ENCODE measurements at regions of chr10 and their contacts with region 1.

Region 1: DNA sequence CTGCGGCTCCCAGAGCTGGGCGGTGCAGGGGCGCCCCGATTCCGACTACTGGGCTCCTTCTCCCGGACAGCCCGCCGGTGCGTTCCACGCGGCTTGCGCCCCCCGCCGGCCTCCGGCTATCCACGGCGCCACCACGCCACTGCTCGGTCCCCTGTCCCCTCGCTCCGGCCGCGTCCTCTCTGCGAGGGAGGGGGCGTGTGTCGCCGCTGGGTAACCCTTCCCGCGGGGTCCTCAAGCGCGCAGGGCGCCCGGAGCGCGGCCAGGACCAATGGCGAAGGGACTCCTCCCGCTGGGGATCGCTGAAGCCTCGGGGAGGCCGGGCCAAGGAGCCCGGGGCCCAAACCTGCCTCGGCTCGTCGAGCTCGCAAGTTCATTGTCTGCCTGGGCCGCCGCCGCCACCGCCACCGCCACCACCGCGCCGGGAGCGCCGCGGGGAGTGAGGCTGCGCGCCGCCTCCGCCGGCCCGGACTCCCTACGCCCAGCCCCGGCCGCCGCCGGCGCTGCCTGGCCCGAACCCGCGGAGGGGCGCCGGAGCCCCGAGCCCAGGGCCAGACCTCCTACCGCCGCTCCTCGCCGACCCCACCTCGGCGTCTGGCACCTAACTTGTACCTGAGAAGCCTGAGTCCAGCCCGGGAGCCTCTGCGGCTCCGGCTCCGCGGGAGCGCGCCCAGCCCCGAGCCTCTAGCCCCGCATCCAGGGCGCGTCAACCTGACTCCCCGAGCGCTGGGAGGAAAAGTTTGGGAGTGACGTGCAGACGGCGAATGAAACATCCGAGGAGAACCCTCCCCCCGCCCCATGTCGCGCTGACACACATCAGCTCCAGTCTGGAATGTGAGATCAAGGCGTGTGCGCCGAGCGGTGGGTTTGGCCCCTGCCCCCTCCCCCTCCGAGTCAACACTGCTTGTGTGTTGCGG is at the start of gene CHST15:
- DNase-seq: peak; percentile 55
- ATAC-seq: peak; percentile 43
- H3K4me3 Mint-ChIP-seq: peak within 1 kb of the TSS; percentile 90
- H3K27ac Mint-ChIP-seq: peak within 1 kb of the TSS; percentile 71
- H3K4me1 Mint-ChIP-seq: peaks cover 51% of the 10 kb centered on the region
- H3K27me3 Mint-ChIP-seq: no peaks in the 10 kb centered on the region
- CTCF ChIP-seq: no peak
- total RNA-seq, gene CHST15: 12.1 and 13.8 TPM in 2 replicates

Region 2: GRCh38 chr10:123994417-123995081 is 98.6 kb before region 1 on chr10:
- CTCF ChIA-PET with region 1: interaction called, 6 read pairs
- POLR2A ChIA-PET with region 1: interaction called, 8 read pairs
- intact Hi-C with region 1: loop called (anchors 2 kb)
- DNase-seq: peak; percentile 89
- ATAC-seq: peak; percentile 85
- H3K4me3 Mint-ChIP-seq: peak overlapping the region; percentile 73
- H3K27ac Mint-ChIP-seq: no peak overlapping the region
- H3K4me1 Mint-ChIP-seq: peaks cover 42% of the 10 kb centered on the region
- H3K27me3 Mint-ChIP-seq: peaks cover 38% of the 10 kb centered on the region
- CTCF ChIP-seq: peak; percentile 91

Region 3: GRCh38 chr10:124043310-124044142 is 49.6 kb before region 1 on chr10:
- CTCF ChIA-PET with region 1: no interaction called
- POLR2A ChIA-PET with region 1: interaction called, 17 read pairs
- intact Hi-C with region 1: no loop called
- DNase-seq: no peak
- ATAC-seq: peak; percentile 93
- H3K4me3 Mint-ChIP-seq: peak overlapping the region; percentile 24
- H3K27ac Mint-ChIP-seq: peak overlapping the region; percentile 51
- H3K4me1 Mint-ChIP-seq: peaks cover 48% of the 10 kb centered on the region
- H3K27me3 Mint-ChIP-seq: no peaks in the 10 kb centered on the region
- CTCF ChIP-seq: no peak

Region 4: DNA sequence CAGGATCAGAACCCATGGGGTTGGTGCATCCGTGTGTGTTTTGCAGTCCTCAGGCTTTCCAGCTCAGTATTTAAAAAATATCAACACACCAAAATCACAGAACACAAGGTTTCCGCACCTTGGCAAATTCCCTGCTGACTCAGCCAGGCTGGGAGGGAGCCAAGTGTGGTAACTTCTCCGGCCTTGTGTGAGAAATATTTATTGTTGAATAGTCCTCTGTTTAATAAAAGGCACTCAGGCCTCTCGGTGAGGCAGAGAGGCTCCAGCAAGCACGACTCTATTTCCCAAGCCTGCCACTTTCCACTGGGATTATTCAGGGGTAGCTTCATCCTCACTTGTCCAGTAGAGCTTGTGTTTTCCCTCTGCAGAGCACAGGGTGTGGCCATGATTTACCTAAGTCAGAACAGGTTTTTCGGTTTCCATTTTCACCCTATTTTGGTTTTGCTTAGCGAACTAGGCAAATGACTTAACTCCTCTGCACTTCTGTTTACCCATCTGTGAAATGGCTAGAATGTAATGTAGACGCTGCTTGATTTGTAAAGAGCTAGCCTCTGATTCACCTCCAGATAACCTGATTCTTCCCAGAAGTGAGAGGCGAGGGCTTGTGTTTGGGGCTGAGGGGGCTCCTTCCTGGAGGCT is 13.2 kb after region 1 on chr10:
- CTCF ChIA-PET with region 1: interaction called, 3 read pairs
- POLR2A ChIA-PET with region 1: interaction called, 26 read pairs
- intact Hi-C with region 1: loop called (anchors 2 kb)
- DNase-seq: no peak
- ATAC-seq: peak; percentile 91
- H3K4me3 Mint-ChIP-seq: peak overlapping the region; percentile 69
- H3K27ac Mint-ChIP-seq: peak overlapping the region; percentile 81
- H3K4me1 Mint-ChIP-seq: peaks cover 75% of the 10 kb centered on the region
- H3K27me3 Mint-ChIP-seq: no peaks in the 10 kb centered on the region
- CTCF ChIP-seq: no peak

Region 5: DNA sequence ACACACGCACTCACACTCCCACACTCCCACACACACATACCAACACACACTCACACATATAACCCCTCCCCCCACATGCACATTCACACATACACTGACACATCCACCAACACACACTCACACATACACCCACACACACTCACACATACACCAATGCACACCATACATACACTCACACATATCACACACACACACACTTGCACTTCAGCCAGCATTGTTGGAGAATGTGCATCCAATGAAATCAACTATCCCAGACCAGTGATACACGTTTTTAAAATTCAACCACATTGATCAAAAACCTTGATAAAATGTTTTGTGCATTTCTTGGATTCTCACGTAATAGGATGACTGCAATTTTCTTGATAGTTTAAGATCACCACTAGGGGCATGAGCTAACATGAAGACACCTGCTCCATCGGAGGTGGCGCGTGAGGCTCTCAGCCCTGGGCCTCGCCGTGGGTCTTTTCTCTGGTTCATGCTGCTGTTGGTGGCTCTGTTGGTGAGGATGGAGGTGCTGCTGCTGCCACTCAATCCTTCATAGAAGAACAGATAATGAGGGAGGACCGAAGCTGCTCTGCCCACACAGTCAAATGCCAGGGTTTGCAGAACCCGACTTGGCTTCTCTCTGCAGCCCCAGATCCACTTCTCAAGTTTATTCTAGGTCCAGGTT is 32.5 kb after region 1 on chr10:
- CTCF ChIA-PET with region 1: interaction called, 4 read pairs
- POLR2A ChIA-PET with region 1: interaction called, 15 read pairs
- intact Hi-C with region 1: loop called (anchors 1 kb)
- DNase-seq: no peak
- ATAC-seq: peak; percentile 23
- H3K4me3 Mint-ChIP-seq: no peak overlapping the region
- H3K27ac Mint-ChIP-seq: no peak overlapping the region
- H3K4me1 Mint-ChIP-seq: peaks cover 3% of the 10 kb centered on the region
- H3K27me3 Mint-ChIP-seq: no peaks in the 10 kb centered on the region
- CTCF ChIP-seq: no peak

Region 6: GRCh38 chr10:124221356-124222317 is 128.5 kb after region 1 on chr10:
- CTCF ChIA-PET with region 1: no interaction called
- POLR2A ChIA-PET with region 1: interaction called, 7 read pairs
- intact Hi-C with region 1: loop called (anchors 1 kb)
- DNase-seq: no peak
- ATAC-seq: peak; percentile 16
- H3K4me3 Mint-ChIP-seq: peak overlapping the region; percentile 74
- H3K27ac Mint-ChIP-seq: no peak overlapping the region
- H3K4me1 Mint-ChIP-seq: peaks cover 33% of the 10 kb centered on the region
- H3K27me3 Mint-ChIP-seq: no peaks in the 10 kb centered on the region
- CTCF ChIP-seq: no peak

Region 7: GRCh38 chr10:124539935-124540641 is 447.0 kb after region 1 on chr10:
- CTCF ChIA-PET with region 1: no interaction called
- POLR2A ChIA-PET with region 1: no interaction called
- intact Hi-C with region 1: no loop called
- DNase-seq: peak; percentile 71
- ATAC-seq: peak; percentile 66
- H3K4me3 Mint-ChIP-seq: peak overlapping the region; percentile 50
- H3K27ac Mint-ChIP-seq: peak overlapping the region; percentile 82
- H3K4me1 Mint-ChIP-seq: peaks cover 89% of the 10 kb centered on the region
- H3K27me3 Mint-ChIP-seq: no peaks in the 10 kb centered on the region
- CTCF ChIP-seq: no peak

Measured in activated B cell treated with CpG ODN at 0.5 μM for 24 hours (primary cell).